Right cardiac atrium (tissue), 5 donors: ENCODE measurements at regions of chr2 and their contacts with region 1.

Region 1: GRCh38 chr2:233643128-233643527 is 6.9 kb downstream of the UGT1A10 start:
- DNase-seq: no peak
- ATAC-seq: no peak
- H3K4me3 ChIP-seq: no peak overlapping the region
- H3K27ac ChIP-seq: no peak overlapping the region
- H3K4me1 ChIP-seq: no peaks in the 10 kb centered on the region
- H3K27me3 ChIP-seq: no peaks in the 10 kb centered on the region

Region 2: GRCh38 chr2:233503947-233504637 is 139.0 kb before region 1 on chr2:
- intact Hi-C with region 1: no loop called
- DNase-seq: no peak
- ATAC-seq: no peak
- H3K4me3 ChIP-seq: no peak overlapping the region
- H3K27ac ChIP-seq: no peak overlapping the region
- H3K4me1 ChIP-seq: no peaks in the 10 kb centered on the region
- H3K27me3 ChIP-seq: no peaks in the 10 kb centered on the region

Region 3: DNA sequence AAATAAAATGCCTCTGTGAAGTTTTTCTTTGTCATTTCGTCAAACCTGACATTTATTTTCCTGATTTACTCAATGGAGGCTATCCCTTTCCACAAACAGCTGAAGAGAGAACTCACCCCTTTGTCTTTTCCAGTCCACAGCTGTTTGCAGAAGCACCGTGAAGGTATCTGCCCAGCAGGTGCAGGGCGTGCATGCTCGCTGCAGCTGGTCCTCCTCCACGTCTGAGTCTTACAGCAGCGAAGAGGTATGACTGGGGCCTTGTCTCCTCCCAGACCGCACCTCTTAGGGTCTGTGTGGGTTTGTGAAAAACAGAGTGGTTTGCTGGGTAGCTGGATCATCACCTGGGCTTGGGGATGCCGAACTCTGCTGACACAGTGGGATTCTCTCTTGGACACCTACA is 417.1 kb after region 1 on chr2:
- intact Hi-C with region 1: loop called in 1 of 4 experiments (anchors 10 kb)
- DNase-seq: no peak
- ATAC-seq: no peak
- H3K4me3 ChIP-seq: no peak overlapping the region
- H3K27ac ChIP-seq: no peak overlapping the region
- H3K4me1 ChIP-seq: no peaks in the 10 kb centered on the region
- H3K27me3 ChIP-seq: no peaks in the 10 kb centered on the region